Right cardiac atrium (tissue), 5 donors: ENCODE measurements at regions of chr12 and their contacts with region 1.

Region 1: GRCh38 chr12:48084066-48084465 is 21.8 kb downstream of the SENP1 start:
- DNase-seq: no peak
- ATAC-seq: no peak
- H3K4me3 ChIP-seq: no peak overlapping the region
- H3K27ac ChIP-seq: no peak overlapping the region
- H3K4me1 ChIP-seq: no peaks in the 10 kb centered on the region
- H3K27me3 ChIP-seq: no peaks in the 10 kb centered on the region

Region 2: GRCh38 chr12:48157018-48157888 is 73.2 kb after region 1 on chr12 and contains the start of gene ASB8:
- intact Hi-C with region 1: loop called in 3 of 4 experiments (anchors 5 kb)
- DNase-seq: peak; percentile 99 to 100 (median 100)
- ATAC-seq: peak; percentile 98 to 99
- H3K4me3 ChIP-seq: peak within 1 kb of the TSS; percentile 61
- H3K27ac ChIP-seq: peak within 1 kb of the TSS; percentile 92
- H3K4me1 ChIP-seq: peaks cover 2% of the 10 kb centered on the region
- H3K27me3 ChIP-seq: no peaks in the 10 kb centered on the region
- total RNA-seq, gene ASB8: 58.5 to 69.9 (median 62.4) TPM

Region 3: DNA sequence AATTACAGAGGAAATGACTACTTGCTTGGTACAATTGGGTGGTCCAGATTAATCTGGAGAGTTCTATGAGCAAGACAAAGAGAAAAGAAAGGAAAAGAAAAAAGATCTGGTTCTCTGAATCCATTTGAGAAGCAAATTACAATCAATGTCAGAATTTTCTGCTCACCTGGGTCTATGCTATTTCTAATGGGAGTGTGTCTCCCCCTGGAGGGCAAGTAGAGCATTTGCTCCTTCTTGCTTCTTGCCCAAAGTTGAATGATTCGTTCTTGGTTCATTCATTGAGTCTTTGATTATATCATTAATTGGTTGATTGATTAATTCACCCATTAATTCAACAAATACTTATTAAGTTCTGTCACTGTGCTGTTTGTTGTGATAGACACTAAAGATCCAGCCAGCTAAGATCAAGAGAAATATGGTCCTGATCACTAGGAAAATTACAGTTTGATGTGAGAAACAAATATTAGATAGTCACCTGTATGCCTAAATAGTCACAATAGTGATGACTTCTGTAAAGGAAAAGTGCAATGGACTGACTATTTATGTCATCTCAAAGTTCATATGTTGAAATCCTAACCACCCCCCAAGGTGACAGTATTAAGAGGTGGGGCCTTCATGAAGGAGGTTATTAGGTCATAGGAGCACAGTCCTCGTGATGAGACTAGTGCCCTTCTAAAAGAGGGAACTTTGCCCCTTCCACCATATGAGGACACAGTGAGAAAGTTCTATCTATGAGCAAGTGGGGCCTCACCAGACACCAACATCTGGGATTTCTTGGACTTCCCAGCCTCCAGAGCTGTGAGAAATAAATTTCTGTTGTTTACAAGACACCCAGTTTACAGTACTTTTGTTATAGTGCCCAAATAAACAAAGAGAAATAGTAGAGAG is 81.3 kb after region 1 on chr12:
- intact Hi-C with region 1: loop called (anchors 5 kb)
- DNase-seq: no peak
- ATAC-seq: peak in 1 of 2 donors; percentile 49
- H3K4me3 ChIP-seq: no peak overlapping the region
- H3K27ac ChIP-seq: no peak overlapping the region
- H3K4me1 ChIP-seq: peaks cover 2% of the 10 kb centered on the region
- H3K27me3 ChIP-seq: no peaks in the 10 kb centered on the region